BJ (cell line): ENCODE measurements at regions of chr16 and their contacts with region 1.

Region 1: GRCh38 chr16:8885674-8886592 is 3.8 kb downstream of the LITAFD start:
- DNase-seq: no peak
- H3K4me3 ChIP-seq: no peak overlapping the region
- H3K27me3 ChIP-seq: no peaks in the 10 kb centered on the region
- CTCF ChIP-seq: peak; percentile 13; the same call in 1 of the 2 replicates

Region 2: DNA sequence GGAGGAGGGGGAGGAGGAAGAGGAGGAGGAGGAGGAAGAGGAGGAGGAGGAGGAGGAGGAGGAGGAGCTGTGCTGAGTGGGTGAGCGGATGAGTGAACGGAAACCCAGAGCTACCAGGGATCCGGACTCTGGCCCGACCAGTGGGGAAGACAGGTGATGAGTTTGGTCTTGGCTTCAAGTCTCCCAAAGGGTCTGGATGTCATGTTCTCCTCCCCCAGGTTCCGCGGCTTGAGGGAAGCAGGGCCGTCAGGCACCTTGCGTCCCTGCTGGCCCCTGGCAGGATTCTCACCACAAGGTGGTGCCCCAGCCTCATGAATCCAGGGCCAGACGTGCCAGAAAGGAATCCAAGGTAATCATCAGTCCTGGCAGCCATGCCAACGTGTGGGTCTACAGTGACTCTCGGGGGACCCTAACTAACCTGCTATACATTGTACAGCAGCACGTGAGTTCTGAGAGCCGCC is 225.1 kb before region 1 on chr16:
- CTCF ChIA-PET with region 1: interaction called, 25 read pairs
- POLR2A ChIA-PET with region 1: no interaction called
- DNase-seq: no peak
- H3K4me3 ChIP-seq: no peak overlapping the region
- H3K27me3 ChIP-seq: no peaks in the 10 kb centered on the region; the same call in 1 of the 2 replicates
- CTCF ChIP-seq: peak; percentile 73

Region 3: GRCh38 chr16:8685994-8686621 is 199.8 kb before region 1 on chr16:
- CTCF ChIA-PET with region 1: no interaction called
- POLR2A ChIA-PET with region 1: no interaction called
- DNase-seq: no peak
- H3K4me3 ChIP-seq: no peak overlapping the region
- H3K27me3 ChIP-seq: no peaks in the 10 kb centered on the region
- CTCF ChIP-seq: no peak

Region 4: GRCh38 chr16:8828541-8829165 is 57.3 kb before region 1 on chr16:
- CTCF ChIA-PET with region 1: no interaction called
- POLR2A ChIA-PET with region 1: no interaction called
- DNase-seq: no peak
- H3K4me3 ChIP-seq: no peak overlapping the region
- H3K27me3 ChIP-seq: no peaks in the 10 kb centered on the region
- CTCF ChIP-seq: no peak